Activated naive CD4-positive, alpha-beta T cell treated with anti-CD3 and anti-CD28 coated beads, Interleukin-2, amount 10 ng/mL, durations not matched to agents 7 days and 5 days (primary cell): ENCODE measurements at regions of chr1 and their contacts with region 1.

Region 1: GRCh38 chr1:87084244-87084836 is 169.9 kb downstream of the HS2ST1 start:
- DNase-seq: no peak
- H3K4me3 Mint-ChIP-seq: no peak overlapping the region
- H3K27ac Mint-ChIP-seq: no peak overlapping the region
- H3K4me1 Mint-ChIP-seq: peaks cover 6% of the 10 kb centered on the region
- H3K27me3 Mint-ChIP-seq: no peaks in the 10 kb centered on the region

Region 2: DNA sequence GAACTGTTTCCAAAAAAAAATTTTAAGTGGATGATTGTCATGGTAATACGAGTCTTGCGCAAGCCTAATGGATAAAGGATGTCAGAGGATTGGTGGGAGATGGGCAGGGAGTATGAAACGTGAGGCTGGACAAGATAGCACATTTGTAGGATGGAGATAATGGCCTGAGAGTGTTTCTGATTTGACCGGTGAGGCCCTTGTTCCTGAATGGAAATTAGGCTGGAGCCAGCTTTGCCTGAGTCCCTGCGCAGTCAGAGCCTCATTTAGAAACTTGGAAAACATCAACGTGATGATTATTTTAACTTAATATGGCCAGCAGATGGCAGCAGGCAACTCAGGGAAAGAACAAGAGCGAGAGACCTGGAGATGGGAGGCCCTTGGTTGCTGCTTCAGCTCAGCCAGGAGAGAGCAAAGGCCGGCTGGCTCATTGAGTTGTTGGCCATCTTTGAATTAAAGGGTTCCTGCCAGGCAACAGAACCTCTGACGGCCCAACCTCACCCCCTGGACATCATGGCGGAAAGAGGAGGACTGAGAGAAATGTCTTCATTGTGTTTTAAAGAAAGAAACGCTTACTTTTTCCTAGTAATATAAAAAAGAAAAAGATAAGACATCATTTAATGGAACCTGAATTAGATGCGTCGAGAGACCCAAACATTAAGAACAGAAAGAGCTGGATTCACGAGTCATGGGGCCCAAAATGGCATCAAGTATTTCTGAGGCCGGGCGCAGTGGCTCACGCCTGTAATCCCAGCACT is 250.7 kb before region 1 on chr1:
- CTCF ChIA-PET with region 1: interaction called, 52 read pairs
- DNase-seq: peak; percentile 62
- H3K4me3 Mint-ChIP-seq: no peak overlapping the region
- H3K27ac Mint-ChIP-seq: no peak overlapping the region
- H3K4me1 Mint-ChIP-seq: no peaks in the 10 kb centered on the region
- H3K27me3 Mint-ChIP-seq: no peaks in the 10 kb centered on the region

Region 3: GRCh38 chr1:86913896-86914634 is 170.3 kb before region 1 on chr1 and contains the start of gene SELENOF:
- CTCF ChIA-PET with region 1: interaction called, 10 read pairs
- DNase-seq: peak; percentile 100
- H3K4me3 Mint-ChIP-seq: no peak within 1 kb of the TSS
- H3K27ac Mint-ChIP-seq: no peak within 1 kb of the TSS
- H3K4me1 Mint-ChIP-seq: peaks cover 43% of the 10 kb centered on the region
- H3K27me3 Mint-ChIP-seq: no peaks in the 10 kb centered on the region